ENCODE measurements at regions of chr6 and their contacts with region 1.

Region 1: DNA sequence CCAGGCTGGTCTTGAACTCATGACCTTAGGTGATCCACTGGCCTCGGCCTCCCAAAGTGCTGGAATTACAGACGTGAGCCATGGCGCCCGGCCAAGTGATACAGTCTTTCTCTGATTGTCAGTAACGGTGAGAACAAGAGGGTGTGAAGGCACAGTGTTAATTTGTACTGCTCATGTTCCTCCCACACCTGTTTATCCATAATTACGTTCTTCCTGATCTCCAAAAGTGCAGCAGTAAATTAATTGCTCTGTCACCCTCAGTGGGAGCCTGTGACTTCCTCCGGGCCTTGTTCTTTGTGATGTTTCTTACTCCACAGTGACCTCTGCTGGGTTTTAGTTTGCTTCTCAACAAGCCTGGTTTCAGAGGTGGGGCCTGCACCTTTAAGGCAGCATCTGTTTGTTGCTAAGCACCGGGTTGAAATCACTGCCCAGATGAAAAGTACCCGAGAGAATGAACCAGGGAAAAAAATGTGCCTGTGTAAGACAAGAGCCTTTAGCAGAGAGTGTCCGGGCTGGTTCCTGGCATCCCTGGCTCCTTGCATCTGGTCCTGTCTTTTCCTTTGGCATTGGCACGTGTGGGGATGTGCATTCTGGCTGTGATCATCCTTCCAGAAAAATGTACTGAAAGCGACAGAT is 89.1 kb upstream of the CLDN20 start:
- DNase-seq: peak in 1 of 5 donors; percentile 27
- H3K4me3 ChIP-seq: no peak overlapping the region
- H3K27ac ChIP-seq: no peak overlapping the region
- H3K4me1 ChIP-seq: peaks cover 3% of the 10 kb centered on the region
- H3K27me3 ChIP-seq: no peaks in the 10 kb centered on the region
- CTCF ChIP-seq: peak in 1 of 3 donors; percentile 33
- EP300 ChIP-seq: no peak
- POLR2A ChIP-seq: no peak

Region 2: GRCh38 chr6:154675602-154676088 is 499.0 kb before region 1 on chr6:
- intact Hi-C with region 1: loop called in 1 of 4 experiments (anchors 10 kb)
- DNase-seq: peak; percentile 80 to 89 (median 87)
- H3K4me3 ChIP-seq: no peak overlapping the region
- H3K27ac ChIP-seq: no peak overlapping the region
- H3K4me1 ChIP-seq: no peaks in the 10 kb centered on the region
- H3K27me3 ChIP-seq: no peaks in the 10 kb centered on the region
- CTCF ChIP-seq: peak; percentile 95 to 98 (median 98)
- EP300 ChIP-seq: no peak
- POLR2A ChIP-seq: no peak

Region 3: DNA sequence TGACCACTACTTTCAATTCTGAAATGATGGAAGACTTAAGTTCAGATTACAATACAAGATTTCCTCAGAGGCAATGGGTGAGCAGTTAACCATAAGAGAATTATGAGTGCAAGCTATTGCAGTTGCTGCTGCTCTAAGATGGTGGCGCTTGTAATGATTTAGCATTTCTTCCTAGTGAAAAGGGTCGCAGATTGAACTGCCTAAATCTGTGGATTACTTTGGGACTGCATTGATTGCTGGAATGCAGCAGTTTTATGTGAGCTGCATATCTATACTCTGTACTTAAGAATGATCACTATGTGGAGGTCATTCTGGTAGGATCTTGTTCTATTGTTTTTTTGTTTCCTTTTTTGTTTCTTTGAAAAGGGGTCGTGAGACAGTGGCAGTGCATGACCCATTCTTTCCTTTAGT is 436.1 kb before region 1 on chr6:
- intact Hi-C with region 1: no loop called
- DNase-seq: no peak
- H3K4me3 ChIP-seq: no peak overlapping the region
- H3K27ac ChIP-seq: no peak overlapping the region
- H3K4me1 ChIP-seq: peaks cover 29% of the 10 kb centered on the region
- H3K27me3 ChIP-seq: no peaks in the 10 kb centered on the region
- CTCF ChIP-seq: no peak
- EP300 ChIP-seq: no peak
- POLR2A ChIP-seq: no peak

Region 4: GRCh38 chr6:154928325-154928922 is 246.3 kb before region 1 on chr6:
- intact Hi-C with region 1: loop called (anchors 10 kb)
- DNase-seq: peak; percentile 21 to 53 (median 42)
- H3K4me3 ChIP-seq: no peak overlapping the region
- H3K27ac ChIP-seq: no peak overlapping the region
- H3K4me1 ChIP-seq: no peaks in the 10 kb centered on the region
- H3K27me3 ChIP-seq: no peaks in the 10 kb centered on the region
- CTCF ChIP-seq: peak; percentile 14 to 54 (median 20)
- EP300 ChIP-seq: no peak
- POLR2A ChIP-seq: no peak

Region 5: GRCh38 chr6:155253337-155253736 is 78.6 kb after region 1 on chr6:
- intact Hi-C with region 1: loop called in 1 of 4 experiments (anchors 10 kb)
- DNase-seq: no peak
- H3K4me3 ChIP-seq: no peak overlapping the region
- H3K27ac ChIP-seq: no peak overlapping the region
- H3K4me1 ChIP-seq: no peaks in the 10 kb centered on the region
- H3K27me3 ChIP-seq: no peaks in the 10 kb centered on the region
- CTCF ChIP-seq: no peak
- EP300 ChIP-seq: no peak
- POLR2A ChIP-seq: no peak

Region 6: GRCh38 chr6:155426408-155426945 is 251.8 kb after region 1 on chr6:
- intact Hi-C with region 1: no loop called
- DNase-seq: no peak
- H3K4me3 ChIP-seq: no peak overlapping the region
- H3K27ac ChIP-seq: no peak overlapping the region
- H3K4me1 ChIP-seq: no peaks in the 10 kb centered on the region
- H3K27me3 ChIP-seq: no peaks in the 10 kb centered on the region
- CTCF ChIP-seq: no peak
- EP300 ChIP-seq: no peak
- POLR2A ChIP-seq: no peak